ENCODE measurements at regions of chr9 and their contacts with region 1.

Region 1: DNA sequence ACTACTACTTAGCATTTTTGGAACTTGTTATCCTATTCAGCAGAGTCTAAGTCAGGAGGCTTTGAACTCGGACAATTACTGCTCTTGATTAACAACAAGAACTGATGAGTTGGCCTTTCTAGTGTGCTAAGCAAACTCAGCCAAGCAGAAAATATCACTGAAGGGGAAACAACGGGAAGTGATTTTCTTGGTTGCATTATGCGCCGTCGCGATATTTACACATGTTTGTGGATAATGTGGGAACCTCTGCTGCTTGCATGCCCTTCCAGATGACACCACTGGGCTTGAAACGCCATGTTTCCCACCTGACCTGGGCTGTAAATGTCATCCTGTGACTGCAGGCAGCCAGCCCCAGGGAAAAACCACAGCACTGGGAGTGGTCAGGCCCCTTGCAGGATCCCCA is 205.5 kb downstream of the PAX5 start:
- DNase-seq: no peak
- ATAC-seq: no peak
- H3K4me3 ChIP-seq: no peak overlapping the region
- H3K27ac ChIP-seq: no peak overlapping the region
- H3K4me1 ChIP-seq: no peaks in the 10 kb centered on the region
- H3K27me3 ChIP-seq: peaks cover 0 to 4% (median 0%) of the 10 kb centered on the region in 3 donors
- CTCF ChIP-seq: no peak

Region 2: GRCh38 chr9:36765468-36766341 is 62.9 kb before region 1 on chr9:
- intact Hi-C with region 1: loop called in 1 of 2 experiments (anchors 10 kb)
- DNase-seq: peak; percentile 49 to 74
- ATAC-seq: peak in 3 of 4 donors; percentile 37 to 77 (median 73)
- H3K4me3 ChIP-seq: peak overlapping the region; percentile 42
- H3K27ac ChIP-seq: no peak overlapping the region
- H3K4me1 ChIP-seq: no peaks in the 10 kb centered on the region
- H3K27me3 ChIP-seq: peaks cover 0 to 16% (median 10%) of the 10 kb centered on the region in 3 donors
- CTCF ChIP-seq: no peak

Measured in psoas muscle (tissue), 8 donors.